Astrocyte of the cerebellum (primary cell): ENCODE measurements at regions of chr7 and their contacts with region 1.

Region 1: GRCh38 chr7:136266457-136266856 is 289.3 kb upstream of the MTPN start:
- DNase-seq: no peak
- H3K4me3 ChIP-seq: no peak overlapping the region
- CTCF ChIP-seq: no peak

Region 2: DNA sequence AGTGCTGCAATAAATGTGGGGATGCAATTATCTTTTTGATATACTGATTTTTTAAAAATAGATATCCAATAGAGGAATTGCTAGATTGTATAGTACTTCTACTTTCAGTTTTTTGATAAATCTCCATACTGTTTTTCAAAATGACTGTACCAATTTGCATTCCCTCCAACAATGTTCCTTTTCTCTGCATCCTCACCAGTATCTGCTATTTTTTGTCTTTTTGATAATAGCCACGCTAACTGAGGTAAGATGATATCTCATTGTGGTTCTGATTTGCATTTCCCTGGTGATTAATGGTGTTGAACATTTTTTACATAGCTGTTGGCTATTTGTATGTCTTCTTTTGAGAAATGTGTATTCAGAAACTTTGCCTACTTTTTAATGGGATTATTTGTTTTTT is 71.6 kb before region 1 on chr7:
- in situ Hi-C with region 1: loop called (anchors 5 kb)
- DNase-seq: no peak
- H3K4me3 ChIP-seq: no peak overlapping the region
- CTCF ChIP-seq: no peak